CD4-positive, alpha-beta memory T cell (primary cell): ENCODE measurements at regions of chr18 and their contacts with region 1.

Region 1: DNA sequence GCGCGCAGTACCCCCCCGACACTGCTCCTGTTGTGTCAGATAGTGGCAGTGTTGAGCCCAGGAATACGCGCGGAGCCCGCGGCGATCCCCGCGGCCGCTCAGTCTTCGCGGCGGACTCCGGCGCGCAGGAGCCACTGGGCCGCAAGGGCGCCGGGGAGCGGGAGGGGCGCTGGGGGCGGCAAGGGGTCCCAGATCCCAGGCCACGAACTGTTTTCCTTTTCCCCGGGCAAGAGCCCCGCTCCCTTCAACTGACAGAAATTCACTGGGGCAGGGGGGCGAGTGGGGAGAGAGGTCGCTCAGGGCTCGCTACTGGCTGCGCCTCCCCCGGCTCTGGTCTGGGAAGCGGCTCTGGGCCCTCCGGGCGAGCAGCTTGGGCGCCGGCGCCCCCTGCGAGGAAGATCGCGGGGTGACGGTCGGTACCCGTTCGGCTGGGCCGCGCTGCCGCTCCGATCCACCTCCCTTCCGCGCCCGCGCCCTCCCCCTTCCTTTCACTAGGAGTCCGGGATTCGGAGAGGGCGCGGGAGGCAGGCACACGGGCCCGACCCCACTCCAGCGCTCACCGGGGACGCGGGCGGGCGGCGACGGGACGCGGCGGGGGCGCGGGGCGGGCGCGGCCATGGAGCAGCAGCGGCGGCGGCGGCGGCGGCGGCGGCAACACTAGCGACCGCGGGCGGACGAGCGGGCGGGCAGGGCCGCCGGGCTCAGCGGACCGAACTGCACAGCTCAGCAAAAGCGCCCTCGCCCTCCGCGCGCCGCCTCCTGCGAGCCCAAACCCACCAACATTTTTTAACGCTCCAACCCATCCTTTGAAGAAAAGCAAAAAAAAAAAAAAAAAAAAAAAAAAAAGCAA is 1.4 kb upstream of the SETBP1 start:
- DNase-seq: peak; percentile 48 to 72 (median 56)
- H3K4me3 ChIP-seq: peak overlapping the region; percentile 29 to 76
- H3K4me3 Mint-ChIP-seq: peak overlapping the region; percentile 24 to 85 (median 78)
- H3K27ac ChIP-seq: no peak overlapping the region
- H3K27ac Mint-ChIP-seq: no peak overlapping the region
- H3K4me1 ChIP-seq: peaks cover 11% of the 10 kb centered on the region
- H3K4me1 Mint-ChIP-seq: peaks cover 0 to 8% (median 3%) of the 10 kb centered on the region in 4 donors
- H3K27me3 ChIP-seq: peaks cover 6% of the 10 kb centered on the region
- H3K27me3 Mint-ChIP-seq: peaks cover 15 to 18% of the 10 kb centered on the region in 2 donors

Region 2: DNA sequence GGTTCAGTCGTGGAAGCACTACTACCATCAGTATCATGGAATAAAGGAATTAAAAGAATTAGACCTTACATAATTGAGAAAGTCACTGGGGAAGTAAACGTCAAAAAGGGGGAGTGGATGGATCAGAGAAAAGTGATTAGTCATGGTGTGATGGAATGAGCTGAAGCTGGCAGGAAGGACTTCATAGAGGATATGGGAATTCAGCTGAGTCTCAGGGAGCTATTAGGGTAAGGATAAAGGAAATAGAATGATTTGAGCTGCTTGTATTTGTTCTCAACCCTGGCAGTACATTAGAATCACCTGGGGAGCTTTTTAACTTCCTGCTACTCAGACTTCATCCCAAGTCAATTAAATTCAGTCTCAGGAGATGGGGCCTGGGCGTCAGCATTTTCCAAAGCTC is 52.0 kb before region 1 on chr18:
- CTCF ChIA-PET with region 1: no interaction called
- POLR2A ChIA-PET with region 1: no interaction called
- intact Hi-C with region 1: no loop called
- DNase-seq: no peak
- H3K4me3 ChIP-seq: no peak overlapping the region
- H3K4me3 Mint-ChIP-seq: no peak overlapping the region
- H3K27ac ChIP-seq: no peak overlapping the region
- H3K27ac Mint-ChIP-seq: no peak overlapping the region
- H3K4me1 ChIP-seq: no peaks in the 10 kb centered on the region
- H3K4me1 Mint-ChIP-seq: no peaks in the 10 kb centered on the region
- H3K27me3 ChIP-seq: no peaks in the 10 kb centered on the region
- H3K27me3 Mint-ChIP-seq: peaks cover 0 to 10% of the 10 kb centered on the region in 2 donors

Region 3: GRCh38 chr18:44693030-44693784 is 13.9 kb after region 1 on chr18:
- CTCF ChIA-PET with region 1: interaction called, 12 read pairs
- POLR2A ChIA-PET with region 1: no interaction called
- intact Hi-C with region 1: no loop called
- DNase-seq: no peak
- H3K4me3 ChIP-seq: no peak overlapping the region
- H3K4me3 Mint-ChIP-seq: no peak overlapping the region
- H3K27ac ChIP-seq: no peak overlapping the region
- H3K27ac Mint-ChIP-seq: no peak overlapping the region
- H3K4me1 ChIP-seq: no peaks in the 10 kb centered on the region
- H3K4me1 Mint-ChIP-seq: peaks cover 0 to 2% (median under 1%) of the 10 kb centered on the region in 4 donors
- H3K27me3 ChIP-seq: no peaks in the 10 kb centered on the region
- H3K27me3 Mint-ChIP-seq: peaks cover 2 to 8% of the 10 kb centered on the region in 2 donors

Region 4: GRCh38 chr18:44725300-44726096 is 46.2 kb after region 1 on chr18:
- CTCF ChIA-PET with region 1: interaction called, 3 read pairs
- POLR2A ChIA-PET with region 1: interaction called, 3 read pairs
- intact Hi-C with region 1: loop called (anchors 5 kb)
- DNase-seq: peak; percentile 35 to 65 (median 52)
- H3K4me3 ChIP-seq: peak overlapping the region in 1 of 2 donors; percentile 26
- H3K4me3 Mint-ChIP-seq: peak overlapping the region; percentile 1 to 71 (median 64)
- H3K27ac ChIP-seq: peak overlapping the region; percentile 39
- H3K27ac Mint-ChIP-seq: peak overlapping the region; percentile 76 to 91 (median 84)
- H3K4me1 ChIP-seq: peaks cover 66% of the 10 kb centered on the region
- H3K4me1 Mint-ChIP-seq: peaks cover 49 to 77% (median 58%) of the 10 kb centered on the region in 4 donors
- H3K27me3 ChIP-seq: no peaks in the 10 kb centered on the region
- H3K27me3 Mint-ChIP-seq: no peaks in the 10 kb centered on the region

Region 5: GRCh38 chr18:44895176-44895798 is 216.0 kb after region 1 on chr18:
- CTCF ChIA-PET with region 1: interaction called, 6 read pairs
- POLR2A ChIA-PET with region 1: no interaction called
- intact Hi-C with region 1: loop called (anchors 1 kb)
- DNase-seq: no peak
- H3K4me3 ChIP-seq: no peak overlapping the region
- H3K4me3 Mint-ChIP-seq: no peak overlapping the region
- H3K27ac ChIP-seq: no peak overlapping the region
- H3K27ac Mint-ChIP-seq: peak overlapping the region in 2 of 7 donors; percentile 5 to 51
- H3K4me1 ChIP-seq: peaks cover 5% of the 10 kb centered on the region
- H3K4me1 Mint-ChIP-seq: peaks cover 8 to 25% (median 14%) of the 10 kb centered on the region in 4 donors
- H3K27me3 ChIP-seq: no peaks in the 10 kb centered on the region
- H3K27me3 Mint-ChIP-seq: no peaks in the 10 kb centered on the region

Region 6: DNA sequence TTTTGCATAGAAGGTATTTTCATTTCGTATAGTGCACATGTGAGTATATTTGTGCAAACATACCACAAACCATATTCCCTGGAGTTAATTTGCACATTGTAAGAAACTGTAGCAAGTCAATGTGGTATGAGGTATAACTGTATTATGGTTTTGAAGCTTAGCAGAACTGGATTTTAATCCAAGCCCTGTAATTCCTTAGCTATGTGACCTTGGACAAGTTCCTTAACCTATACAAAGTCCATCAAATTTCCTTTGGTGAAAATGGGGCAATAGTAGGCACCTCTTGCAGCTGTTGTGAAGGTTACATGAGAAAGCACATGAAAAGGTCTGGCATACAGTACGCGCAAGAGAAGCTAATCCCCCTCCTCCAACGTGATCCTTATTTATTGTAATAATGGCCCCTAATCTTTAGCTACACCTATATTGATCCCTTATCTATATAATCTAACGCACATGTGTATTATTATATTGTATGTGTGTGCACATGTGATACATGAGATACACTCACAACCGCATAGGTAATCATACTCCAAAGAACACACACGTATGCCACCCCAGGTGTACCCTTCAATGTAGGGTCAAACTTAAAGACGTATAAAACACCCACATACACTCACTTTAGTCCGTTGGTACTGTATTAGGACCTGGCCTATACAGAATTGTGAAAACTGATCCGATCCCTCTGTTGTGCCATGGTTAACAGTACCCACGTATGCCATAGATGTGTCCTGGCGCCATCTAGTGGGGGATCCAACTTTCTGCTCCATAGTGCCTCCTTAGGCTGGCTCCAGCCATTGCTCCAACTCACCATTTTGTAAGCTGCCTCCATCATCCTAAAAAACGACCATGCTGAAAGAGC is 533.1 kb after region 1 on chr18:
- CTCF ChIA-PET with region 1: interaction called, 18 read pairs
- POLR2A ChIA-PET with region 1: no interaction called
- intact Hi-C with region 1: no loop called
- DNase-seq: peak; percentile 45 to 54 (median 48)
- H3K4me3 ChIP-seq: no peak overlapping the region
- H3K4me3 Mint-ChIP-seq: no peak overlapping the region
- H3K27ac ChIP-seq: no peak overlapping the region
- H3K27ac Mint-ChIP-seq: no peak overlapping the region
- H3K4me1 ChIP-seq: no peaks in the 10 kb centered on the region
- H3K4me1 Mint-ChIP-seq: no peaks in the 10 kb centered on the region
- H3K27me3 ChIP-seq: no peaks in the 10 kb centered on the region
- H3K27me3 Mint-ChIP-seq: peaks cover 2 to 6% of the 10 kb centered on the region in 2 donors

Region 7: DNA sequence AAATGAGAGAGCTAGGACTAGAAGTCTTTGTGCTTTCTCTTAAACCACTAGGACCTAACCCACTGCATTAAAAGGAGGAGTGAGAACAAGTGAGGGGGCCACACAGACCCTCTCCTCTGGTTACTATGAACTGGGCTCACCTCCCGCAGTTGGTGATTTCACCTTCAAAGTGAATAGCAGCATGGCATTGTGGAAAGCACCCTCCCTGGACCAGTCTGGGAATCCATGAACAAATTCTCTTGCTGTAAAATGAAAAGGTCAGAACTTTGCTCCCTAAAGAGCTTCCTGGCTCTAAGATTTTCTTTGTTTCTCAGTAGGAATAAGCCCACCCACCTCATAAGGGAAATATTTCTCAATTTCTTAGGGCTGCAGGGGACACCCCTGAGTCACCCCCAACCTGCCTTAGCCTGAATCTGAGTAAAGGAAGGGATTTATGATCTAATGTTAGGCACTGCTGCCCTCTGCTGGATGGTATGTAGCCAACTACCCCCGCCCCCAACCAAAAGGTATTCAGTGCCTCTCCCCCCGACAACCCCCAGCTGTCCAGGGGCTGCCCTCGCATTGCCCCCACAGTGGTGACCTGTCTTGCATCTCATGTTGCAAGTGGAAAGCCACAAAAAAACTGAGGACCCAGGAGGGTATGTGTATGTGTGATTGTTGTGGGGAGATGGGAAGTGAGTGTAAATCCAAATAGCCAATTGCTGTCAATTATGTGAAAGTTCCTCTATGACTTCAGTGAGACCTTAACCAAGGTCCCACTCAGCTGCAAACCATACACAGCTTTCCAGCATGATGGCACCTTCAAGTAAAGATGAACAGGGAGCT is 705.1 kb after region 1 on chr18:
- CTCF ChIA-PET with region 1: no interaction called
- POLR2A ChIA-PET with region 1: no interaction called
- intact Hi-C with region 1: loop called (anchors 10 kb)
- DNase-seq: peak in 3 of 5 donors; percentile 1 to 26 (median 10)
- H3K4me3 ChIP-seq: no peak overlapping the region
- H3K4me3 Mint-ChIP-seq: no peak overlapping the region
- H3K27ac ChIP-seq: no peak overlapping the region
- H3K27ac Mint-ChIP-seq: no peak overlapping the region
- H3K4me1 ChIP-seq: no peaks in the 10 kb centered on the region
- H3K4me1 Mint-ChIP-seq: no peaks in the 10 kb centered on the region
- H3K27me3 ChIP-seq: no peaks in the 10 kb centered on the region
- H3K27me3 Mint-ChIP-seq: peaks cover 12 to 13% of the 10 kb centered on the region in 2 donors